CD8-positive, alpha-beta memory T cell (primary cell): ENCODE measurements at regions of chr17 and their contacts with region 1.

Region 1: GRCh38 chr17:42819944-42820535 is 4.0 kb downstream of the BECN1 start:
- DNase-seq: peak; percentile 29 to 66 (median 46)
- H3K4me3 ChIP-seq: no peak overlapping the region
- H3K4me3 Mint-ChIP-seq: peak overlapping the region in 1 of 7 donors; percentile 68
- H3K27ac ChIP-seq: no peak overlapping the region
- H3K27ac Mint-ChIP-seq: peak overlapping the region in 6 of 8 donors; percentile 17 to 70 (median 64)
- H3K4me1 ChIP-seq: peaks cover 14% of the 10 kb centered on the region
- H3K4me1 Mint-ChIP-seq: peaks cover 22 to 42% (median 37%) of the 10 kb centered on the region in 3 donors
- H3K27me3 ChIP-seq: no peaks in the 10 kb centered on the region
- H3K27me3 Mint-ChIP-seq: no peaks in the 10 kb centered on the region

Region 2: GRCh38 chr17:42598905-42599304 is 221.1 kb before region 1 on chr17:
- CTCF ChIA-PET with region 1: no interaction called
- POLR2A ChIA-PET with region 1: no interaction called
- DNase-seq: no peak
- H3K4me3 ChIP-seq: no peak overlapping the region
- H3K4me3 Mint-ChIP-seq: peak overlapping the region in 1 of 7 donors; percentile 15
- H3K27ac ChIP-seq: no peak overlapping the region
- H3K27ac Mint-ChIP-seq: peak overlapping the region in 3 of 8 donors; percentile 26 to 60 (median 43)
- H3K4me1 ChIP-seq: peaks cover 15% of the 10 kb centered on the region
- H3K4me1 Mint-ChIP-seq: peaks cover 27 to 45% (median 39%) of the 10 kb centered on the region in 3 donors
- H3K27me3 ChIP-seq: no peaks in the 10 kb centered on the region
- H3K27me3 Mint-ChIP-seq: no peaks in the 10 kb centered on the region

Region 3: DNA sequence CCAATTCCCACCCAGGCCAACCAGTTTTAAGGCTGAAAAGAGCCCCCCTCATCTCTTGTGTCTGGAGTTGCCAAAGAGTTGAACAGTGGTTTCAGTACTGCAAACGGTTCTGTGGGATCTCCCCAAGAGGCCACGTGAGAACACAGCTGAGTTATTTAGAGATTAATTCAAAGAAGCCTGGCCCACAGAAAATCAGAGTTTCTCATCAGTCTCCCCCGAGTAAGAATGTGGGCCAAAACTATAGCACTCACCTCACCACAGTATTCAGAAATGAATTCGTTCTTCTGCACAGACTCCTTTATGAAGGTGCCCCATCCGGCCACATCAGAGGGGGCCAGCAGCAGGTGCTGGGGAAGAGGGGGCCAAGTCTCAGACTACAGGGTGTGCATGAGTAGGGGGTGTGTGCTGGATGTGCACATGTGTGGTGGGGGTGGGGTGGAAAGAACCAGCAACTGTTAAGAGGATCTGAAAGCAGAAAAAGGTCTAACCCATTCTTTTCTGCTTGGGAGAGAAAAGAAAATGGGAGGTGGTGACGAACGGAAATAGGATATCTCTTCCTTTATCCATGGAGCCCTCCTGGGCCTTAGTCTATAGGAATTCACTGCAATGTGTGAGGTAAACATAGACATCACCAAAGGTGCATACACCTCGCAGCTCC is 115.1 kb before region 1 on chr17:
- CTCF ChIA-PET with region 1: no interaction called
- POLR2A ChIA-PET with region 1: no interaction called
- DNase-seq: no peak
- H3K4me3 ChIP-seq: no peak overlapping the region
- H3K4me3 Mint-ChIP-seq: peak overlapping the region in 1 of 7 donors; percentile 37
- H3K27ac ChIP-seq: no peak overlapping the region
- H3K27ac Mint-ChIP-seq: peak overlapping the region in 1 of 8 donors; percentile 3
- H3K4me1 ChIP-seq: peaks cover 24% of the 10 kb centered on the region
- H3K4me1 Mint-ChIP-seq: peaks cover 10 to 49% (median 16%) of the 10 kb centered on the region in 3 donors
- H3K27me3 ChIP-seq: no peaks in the 10 kb centered on the region
- H3K27me3 Mint-ChIP-seq: no peaks in the 10 kb centered on the region

Region 4: GRCh38 chr17:42773290-42774035 is 46.6 kb before region 1 on chr17 and contains the start of gene VPS25:
- CTCF ChIA-PET with region 1: interaction called, 10 read pairs
- POLR2A ChIA-PET with region 1: interaction called, 10 read pairs
- DNase-seq: peak; percentile 57 to 84 (median 68)
- H3K4me3 ChIP-seq: peak within 1 kb of the TSS; percentile 99
- H3K4me3 Mint-ChIP-seq: peak within 1 kb of the TSS; percentile 91 to 99 (median 98)
- H3K27ac ChIP-seq: peak within 1 kb of the TSS; percentile 91
- H3K27ac Mint-ChIP-seq: peak within 1 kb of the TSS; percentile 88 to 100 (median 99)
- H3K4me1 ChIP-seq: peaks cover 11% of the 10 kb centered on the region
- H3K4me1 Mint-ChIP-seq: peaks cover 19 to 34% (median 30%) of the 10 kb centered on the region in 3 donors
- H3K27me3 ChIP-seq: no peaks in the 10 kb centered on the region
- H3K27me3 Mint-ChIP-seq: peaks cover 0 to 2% of the 10 kb centered on the region in 2 donors
- total RNA-seq, gene VPS25: 101 to 108 TPM

Region 5: GRCh38 chr17:42832974-42833766 is 13.1 kb after region 1 on chr17 and contains the start of gene PSME3:
- CTCF ChIA-PET with region 1: interaction called, 26 read pairs
- POLR2A ChIA-PET with region 1: interaction called, 12 read pairs
- DNase-seq: peak; percentile 82 to 91 (median 88)
- H3K4me3 ChIP-seq: peak within 1 kb of the TSS; percentile 85
- H3K4me3 Mint-ChIP-seq: peak within 1 kb of the TSS; percentile 97 to 99 (median 97)
- H3K27ac ChIP-seq: peak within 1 kb of the TSS; percentile 92
- H3K27ac Mint-ChIP-seq: peak within 1 kb of the TSS; percentile 98 to 100 (median 99)
- H3K4me1 ChIP-seq: peaks cover 19% of the 10 kb centered on the region
- H3K4me1 Mint-ChIP-seq: peaks cover 25 to 30% (median 30%) of the 10 kb centered on the region in 3 donors
- H3K27me3 ChIP-seq: no peaks in the 10 kb centered on the region
- H3K27me3 Mint-ChIP-seq: peaks cover 2 to 3% of the 10 kb centered on the region in 2 donors
- total RNA-seq, gene PSME3: 243 to 244 TPM